ENCODE measurements at regions of chr9 and their contacts with region 1.

Region 1: DNA sequence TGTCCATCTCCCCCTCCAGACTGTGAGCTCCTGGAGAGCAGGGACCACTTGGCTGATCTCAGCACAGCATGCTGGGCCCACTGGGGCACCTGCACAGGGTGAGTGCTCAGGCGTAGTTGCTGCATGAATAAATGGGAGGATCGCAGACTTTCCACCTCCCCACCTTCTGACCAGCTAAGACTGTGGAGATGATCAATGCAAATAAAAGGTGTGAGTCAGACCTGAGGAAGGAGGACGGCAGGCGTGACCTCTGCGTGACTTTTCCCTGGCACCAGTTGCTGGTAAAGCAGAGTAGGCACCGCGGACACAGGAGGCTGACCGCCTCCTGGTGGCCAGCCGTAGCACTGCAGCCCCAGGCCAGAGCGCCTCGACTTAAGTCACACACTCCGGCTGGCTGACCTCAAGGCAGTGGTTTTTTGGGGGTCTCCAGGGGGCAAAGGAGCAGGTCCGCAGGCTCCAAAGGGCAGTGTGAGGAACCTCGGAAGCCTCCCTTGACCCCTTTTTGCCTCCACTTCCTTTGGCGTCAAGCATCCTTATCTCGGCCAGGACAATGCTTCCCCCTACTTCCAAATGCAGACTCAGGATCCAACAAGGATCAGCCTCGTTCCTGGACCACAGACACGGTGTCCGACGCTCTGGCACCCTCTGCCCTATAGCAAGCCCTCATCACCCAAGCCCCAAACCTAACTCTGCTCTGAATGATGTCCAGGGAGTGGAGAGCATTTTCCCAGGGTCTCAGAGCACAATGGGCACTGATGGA is 12.7 kb upstream of the TDRD7 start:
- DNase-seq: peak; percentile 91
- H3K4me3 Mint-ChIP-seq: no peak overlapping the region
- H3K27ac Mint-ChIP-seq: no peak overlapping the region
- H3K4me1 Mint-ChIP-seq: peaks cover 21% of the 10 kb centered on the region
- H3K27me3 Mint-ChIP-seq: peaks cover 37% of the 10 kb centered on the region

Region 2: GRCh38 chr9:97237951-97238851 is 161.0 kb before region 1 on chr9:
- intact Hi-C with region 1: loop called (anchors 10 kb)
- DNase-seq: peak; percentile 92
- H3K4me3 Mint-ChIP-seq: peak overlapping the region; percentile 90
- H3K27ac Mint-ChIP-seq: peak overlapping the region; percentile 90
- H3K4me1 Mint-ChIP-seq: peaks cover 15% of the 10 kb centered on the region
- H3K27me3 Mint-ChIP-seq: peaks cover 7% of the 10 kb centered on the region

Region 3: GRCh38 chr9:97367729-97368128 is 31.4 kb before region 1 on chr9:
- intact Hi-C with region 1: no loop called
- DNase-seq: no peak
- H3K4me3 Mint-ChIP-seq: no peak overlapping the region
- H3K27ac Mint-ChIP-seq: no peak overlapping the region
- H3K4me1 Mint-ChIP-seq: peaks cover 4% of the 10 kb centered on the region
- H3K27me3 Mint-ChIP-seq: no peaks in the 10 kb centered on the region